Head of caudate nucleus (tissue), 42 donors: ENCODE measurements at regions of chr10 and their contacts with region 1.

Region 1: DNA sequence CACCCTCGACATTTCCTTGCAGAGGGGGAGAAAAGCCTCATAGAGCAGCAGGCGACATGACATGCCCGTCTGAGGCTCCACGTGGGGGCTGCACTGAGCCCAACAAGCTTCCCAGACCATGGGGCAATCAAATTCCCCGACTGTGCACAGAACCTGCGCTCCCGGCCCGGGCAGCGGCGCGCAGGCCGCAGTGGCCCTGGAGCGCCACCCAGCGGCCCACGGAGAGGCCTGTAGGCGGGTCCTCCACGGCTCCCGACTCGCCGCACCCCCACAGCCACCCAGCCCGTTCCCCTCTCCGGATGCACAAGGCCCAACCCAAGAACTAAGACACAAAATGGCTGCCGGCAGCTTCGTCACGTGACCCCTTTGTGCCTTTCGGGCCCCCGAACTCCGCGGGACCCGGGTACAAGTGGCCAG is 816 bp downstream of the EPC1 start:
- DNase-seq: peak; percentile 88 to 98 (median 95)

Region 2: GRCh38 chr10:32055813-32056600 is 290.1 kb before region 1 on chr10 and contains the start of gene KIF5B:
- intact Hi-C with region 1: loop called (anchors 10 kb)
- DNase-seq: peak; percentile 53 to 95 (median 89)

Region 3: DNA sequence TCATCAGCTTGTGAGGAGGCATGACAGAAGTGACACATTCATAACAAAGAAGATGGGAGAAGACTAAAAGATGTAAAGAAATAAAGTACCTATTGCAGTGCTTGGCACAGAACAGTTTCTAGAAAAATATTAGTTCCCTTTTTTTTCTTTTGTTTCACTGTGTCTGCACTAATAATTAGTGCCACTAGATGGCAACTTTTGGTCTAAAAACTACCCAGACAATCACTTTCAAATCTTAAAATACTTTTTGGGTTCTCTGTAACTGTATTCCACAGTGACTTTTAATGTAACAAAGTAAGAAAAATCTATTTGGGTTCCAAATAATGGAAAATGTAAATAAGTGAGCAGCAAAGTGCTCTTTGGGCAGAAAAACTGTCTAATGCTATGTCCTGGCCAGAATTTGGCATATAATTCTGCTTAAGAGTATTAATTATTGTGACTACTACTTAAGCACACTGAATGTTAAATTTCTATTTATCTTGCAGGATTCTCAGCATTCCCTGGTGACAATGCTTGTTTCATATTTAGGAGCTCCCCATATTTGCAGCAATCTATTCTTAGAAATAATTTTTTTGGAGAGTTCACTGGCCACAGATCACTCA is 155.2 kb before region 1 on chr10:
- intact Hi-C with region 1: loop called (anchors 5 kb)
- DNase-seq: peak in 1 of 42 donors; percentile 24

Region 4: DNA sequence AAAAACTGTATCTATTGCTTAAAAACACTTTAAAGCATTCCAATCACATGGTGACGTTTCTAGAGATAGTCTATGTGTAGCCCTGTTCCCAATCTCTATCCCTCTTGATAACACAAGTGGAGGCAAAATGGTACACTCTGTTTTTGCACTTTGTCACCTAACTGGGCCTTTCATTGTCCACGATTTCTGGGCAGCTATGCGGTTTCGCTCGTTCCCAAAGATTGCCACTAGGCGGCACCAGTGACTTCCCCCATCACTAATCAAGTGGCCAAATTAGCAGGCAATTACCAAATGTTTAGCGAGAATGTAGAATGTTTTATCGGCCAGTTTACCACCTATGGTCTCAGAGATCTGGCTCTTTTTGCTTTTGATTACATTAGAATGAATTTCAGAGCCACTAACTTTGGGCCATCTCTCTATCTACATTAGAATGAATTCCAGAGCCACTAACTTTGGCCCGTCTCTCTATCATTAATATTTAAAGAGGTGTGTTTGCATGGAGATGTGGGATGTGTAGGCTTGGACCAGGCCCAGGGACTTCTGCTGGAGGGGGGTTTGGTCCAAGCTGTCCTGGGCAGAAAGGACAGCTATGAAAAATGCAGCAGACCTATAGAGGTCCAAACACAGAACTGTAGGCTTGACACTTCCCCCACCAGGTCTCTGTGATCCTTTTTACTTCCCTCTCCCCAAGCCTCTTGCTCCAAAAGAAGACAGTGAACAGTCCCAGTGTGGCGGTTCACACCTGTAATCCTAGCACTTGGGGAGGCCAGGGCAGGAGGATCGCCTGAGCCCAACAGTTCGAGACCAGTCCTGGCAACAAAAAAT is 89.3 kb before region 1 on chr10:
- intact Hi-C with region 1: loop called (anchors 5 kb)
- DNase-seq: peak in 41 of 42 donors; percentile 23 to 91 (median 71)

Region 5: DNA sequence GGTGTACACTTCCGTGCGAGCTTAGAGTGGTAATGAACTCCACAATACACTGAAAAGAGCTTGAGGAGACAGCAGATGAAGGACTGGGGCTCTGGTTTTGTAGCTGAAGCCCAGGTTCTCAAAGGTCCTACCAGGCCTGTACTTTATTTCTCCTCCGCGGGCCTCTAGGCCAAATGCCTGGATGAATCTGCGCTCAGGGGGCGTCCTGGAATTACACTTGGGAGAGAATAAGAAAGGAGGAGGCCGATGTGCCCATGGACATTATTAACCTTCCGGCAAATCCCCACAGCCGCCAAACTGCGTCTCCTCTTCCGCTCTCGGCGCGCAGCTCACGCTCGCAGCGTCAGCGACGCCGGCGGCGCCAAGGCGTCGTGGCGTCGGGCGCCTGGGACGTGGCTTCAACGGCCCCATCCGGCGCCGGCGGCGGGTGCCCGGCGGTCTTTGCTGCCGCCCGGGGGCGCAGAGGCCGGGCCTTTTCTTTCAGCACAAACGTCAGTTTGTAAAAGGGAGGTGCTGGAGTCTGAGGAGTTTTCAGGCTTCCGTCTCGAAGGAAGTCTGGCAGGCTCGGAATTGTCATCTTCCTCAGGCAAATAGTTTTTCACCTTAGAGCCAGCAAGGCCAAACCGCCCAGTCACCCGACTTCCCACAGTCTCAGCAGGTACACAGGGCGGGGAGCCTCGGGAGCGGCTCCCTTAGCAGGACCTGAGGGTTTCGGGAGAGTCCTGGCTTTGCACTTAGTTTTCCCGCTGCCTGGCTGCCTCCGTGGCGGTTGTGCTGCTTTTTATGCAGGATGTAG is 99.8 kb after region 1 on chr10 and contains the start of gene CCDC7:
- intact Hi-C with region 1: loop called (anchors 2 kb)
- DNase-seq: peak; percentile 43 to 92 (median 84)